Calu3 (cell line): ENCODE measurements at regions of chr1 and their contacts with region 1.

Region 1: DNA sequence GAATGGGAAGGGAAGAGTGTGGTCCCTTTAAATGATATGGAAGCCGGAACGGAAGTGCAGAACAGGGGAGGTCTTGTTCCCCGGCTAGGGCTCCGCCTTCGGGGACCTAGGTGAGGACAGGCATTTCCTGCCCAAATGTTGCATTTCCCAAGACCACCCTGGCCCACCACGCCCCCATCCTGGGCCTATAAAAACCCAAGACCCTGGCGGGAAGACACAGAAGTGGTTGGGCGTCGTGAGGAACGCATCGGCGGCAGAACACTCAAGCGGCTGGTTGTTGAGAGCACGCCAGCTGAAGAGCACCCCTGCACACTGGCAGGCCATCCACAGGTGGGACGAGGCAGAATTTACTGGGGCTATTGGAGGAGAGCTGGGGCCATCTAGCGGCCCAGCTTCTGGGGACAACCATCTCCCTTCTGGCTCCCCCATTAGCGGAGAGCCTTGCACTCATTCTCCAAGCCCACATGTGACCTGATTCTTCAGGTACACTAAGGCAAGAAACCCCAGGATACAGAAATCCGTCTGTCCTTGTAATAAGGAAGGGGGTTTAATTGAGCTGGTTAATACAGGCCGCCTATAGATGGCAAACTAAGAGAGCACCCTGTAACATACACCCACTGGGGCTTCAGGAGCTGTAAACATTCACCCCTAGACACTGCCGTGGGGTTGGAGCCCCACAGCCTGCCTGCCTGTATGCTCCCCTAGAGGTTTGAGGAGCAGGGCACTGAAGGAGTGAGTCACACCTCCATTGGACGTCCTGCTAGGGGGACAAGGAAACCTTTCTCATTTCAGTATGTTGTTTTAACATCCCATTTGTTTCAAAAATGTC is 1327.9 kb downstream of the BRINP3 start:
- DNase-seq: peak; percentile 86
- H3K4me3 Mint-ChIP-seq: peak overlapping the region; percentile 88
- H3K27ac Mint-ChIP-seq: peak overlapping the region; percentile 89
- H3K4me1 Mint-ChIP-seq: peaks cover 19% of the 10 kb centered on the region
- H3K27me3 Mint-ChIP-seq: no peaks in the 10 kb centered on the region
- CTCF ChIP-seq: peak; percentile 75

Region 2: DNA sequence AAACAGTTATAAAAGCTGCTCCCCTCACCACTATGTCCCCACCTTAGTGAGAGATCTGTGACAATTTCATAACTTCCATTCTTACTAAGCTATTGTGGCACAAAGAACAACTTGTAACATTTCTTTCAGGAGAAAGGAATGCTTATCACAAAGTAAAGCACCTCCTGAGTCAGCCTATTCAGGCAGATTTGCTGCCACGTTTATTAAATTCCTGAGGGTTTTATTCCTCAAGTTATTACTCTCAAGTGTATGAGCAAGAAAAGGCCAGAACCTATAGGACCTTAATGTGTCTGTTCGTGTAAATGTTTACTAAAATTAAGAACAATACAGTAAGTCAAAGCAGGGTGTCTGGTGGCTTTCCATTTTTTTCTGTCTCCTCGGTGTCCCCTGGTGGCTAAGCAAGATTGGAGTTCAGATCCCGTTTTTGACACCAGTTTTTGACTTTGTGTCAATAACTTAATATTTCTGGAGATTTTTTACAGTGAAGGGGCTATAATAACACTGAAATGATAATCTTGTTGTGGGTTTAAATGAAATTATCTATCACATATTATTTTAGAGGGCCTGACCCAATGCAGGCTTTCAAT is 211.7 kb before region 1 on chr1:
- CTCF ChIA-PET with region 1: no interaction called
- intact Hi-C with region 1: loop called (anchors 5 kb)
- DNase-seq: peak; percentile 30
- H3K4me3 Mint-ChIP-seq: no peak overlapping the region
- H3K27ac Mint-ChIP-seq: no peak overlapping the region
- H3K4me1 Mint-ChIP-seq: no peaks in the 10 kb centered on the region
- H3K27me3 Mint-ChIP-seq: no peaks in the 10 kb centered on the region
- CTCF ChIP-seq: peak; percentile 65

Region 3: DNA sequence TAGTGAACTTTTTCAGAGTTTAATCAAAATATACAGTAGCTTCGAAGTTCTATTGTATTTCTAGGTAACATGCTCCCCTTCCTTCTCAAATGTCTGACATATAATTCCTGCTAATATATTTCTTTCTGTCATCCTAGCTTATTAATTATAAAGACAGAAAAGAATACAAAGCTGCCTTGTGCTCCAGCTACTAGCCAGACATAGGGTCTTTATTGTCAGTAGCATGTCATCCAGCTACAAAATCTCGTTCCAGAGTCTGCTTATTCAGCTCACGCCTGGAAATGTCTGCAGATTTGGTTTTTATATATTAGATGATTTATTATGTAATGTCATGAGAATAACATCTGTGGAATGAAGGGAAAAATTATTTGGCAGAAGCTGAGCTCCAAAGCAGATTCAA is 225.1 kb after region 1 on chr1:
- CTCF ChIA-PET with region 1: no interaction called
- intact Hi-C with region 1: no loop called
- DNase-seq: no peak
- H3K4me3 Mint-ChIP-seq: no peak overlapping the region
- H3K27ac Mint-ChIP-seq: no peak overlapping the region
- H3K4me1 Mint-ChIP-seq: no peaks in the 10 kb centered on the region
- H3K27me3 Mint-ChIP-seq: no peaks in the 10 kb centered on the region
- CTCF ChIP-seq: no peak